A673 (cell line): ENCODE measurements at regions of chr9 and their contacts with region 1.

Region 1: GRCh38 chr9:120998111-120998510 is 52.0 kb downstream of the C5 start:
- DNase-seq: no peak
- H3K4me3 ChIP-seq: no peak overlapping the region
- H3K27ac ChIP-seq: no peak overlapping the region
- H3K4me1 ChIP-seq: no peaks in the 10 kb centered on the region
- H3K27me3 ChIP-seq: no peaks in the 10 kb centered on the region
- CTCF ChIP-seq: no peak

Region 2: DNA sequence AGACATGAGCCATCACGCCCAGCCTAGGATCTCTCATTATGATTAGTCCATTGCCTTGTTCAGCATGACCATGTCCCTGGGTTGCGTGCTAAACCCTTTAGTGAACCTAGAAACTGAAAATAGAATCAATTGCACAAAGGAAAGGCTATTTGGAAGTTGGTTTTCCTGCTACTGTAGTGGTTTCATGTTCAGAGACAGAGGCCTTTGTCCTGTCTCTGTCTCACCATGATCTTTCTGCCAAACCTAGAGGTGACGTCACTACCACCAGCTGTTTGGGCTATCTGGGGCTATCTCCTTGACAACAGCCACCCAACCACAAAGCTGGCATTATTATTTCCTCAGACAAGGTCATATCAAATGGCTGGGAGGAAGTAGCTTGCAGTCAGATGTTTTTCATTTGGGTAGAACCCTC is 414.1 kb before region 1 on chr9:
- CTCF ChIA-PET with region 1: no interaction called
- POLR2A ChIA-PET with region 1: interaction called, 16 read pairs
- intact Hi-C with region 1: no loop called
- DNase-seq: peak; percentile 68
- H3K4me3 ChIP-seq: no peak overlapping the region
- H3K27ac ChIP-seq: no peak overlapping the region
- H3K4me1 ChIP-seq: peaks cover 10% of the 10 kb centered on the region
- H3K27me3 ChIP-seq: no peaks in the 10 kb centered on the region
- CTCF ChIP-seq: no peak

Region 3: GRCh38 chr9:121026260-121026691 is 28.2 kb after region 1 on chr9:
- CTCF ChIA-PET with region 1: no interaction called
- POLR2A ChIA-PET with region 1: no interaction called
- intact Hi-C with region 1: no loop called
- DNase-seq: no peak
- H3K4me3 ChIP-seq: no peak overlapping the region
- H3K27ac ChIP-seq: no peak overlapping the region
- H3K4me1 ChIP-seq: no peaks in the 10 kb centered on the region
- H3K27me3 ChIP-seq: no peaks in the 10 kb centered on the region
- CTCF ChIP-seq: no peak